Heart right ventricle (tissue), 16 donors: ENCODE measurements at regions of chr20 and their contacts with region 1.

Region 1: DNA sequence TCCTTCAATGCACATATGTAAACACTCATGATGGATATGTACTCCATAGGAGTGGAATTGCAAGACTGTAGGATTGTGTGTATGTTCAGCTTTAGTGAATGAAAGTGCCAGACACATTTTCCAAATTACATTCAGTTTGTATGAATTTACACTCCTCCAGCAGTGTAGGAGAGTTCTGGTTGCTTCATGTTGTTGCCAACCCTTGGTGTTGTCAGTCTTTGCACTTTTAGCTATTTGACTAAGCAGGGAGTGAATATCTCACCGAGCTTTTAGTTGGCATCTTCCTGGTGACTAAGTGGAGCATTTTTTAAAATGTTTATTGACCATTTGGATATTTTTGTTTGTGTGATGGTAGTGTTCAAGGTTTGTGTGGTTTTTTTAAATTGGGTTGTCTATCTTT is 23.9 kb downstream of the NKX2-4 start:
- DNase-seq: no peak
- ATAC-seq: no peak
- H3K4me3 ChIP-seq: no peak overlapping the region
- H3K27ac ChIP-seq: no peak overlapping the region
- H3K4me1 ChIP-seq: peaks cover 0 to 7% (median 0%) of the 10 kb centered on the region in 9 donors
- H3K27me3 ChIP-seq: no peaks in the 10 kb centered on the region
- CTCF ChIP-seq: no peak

Region 2: DNA sequence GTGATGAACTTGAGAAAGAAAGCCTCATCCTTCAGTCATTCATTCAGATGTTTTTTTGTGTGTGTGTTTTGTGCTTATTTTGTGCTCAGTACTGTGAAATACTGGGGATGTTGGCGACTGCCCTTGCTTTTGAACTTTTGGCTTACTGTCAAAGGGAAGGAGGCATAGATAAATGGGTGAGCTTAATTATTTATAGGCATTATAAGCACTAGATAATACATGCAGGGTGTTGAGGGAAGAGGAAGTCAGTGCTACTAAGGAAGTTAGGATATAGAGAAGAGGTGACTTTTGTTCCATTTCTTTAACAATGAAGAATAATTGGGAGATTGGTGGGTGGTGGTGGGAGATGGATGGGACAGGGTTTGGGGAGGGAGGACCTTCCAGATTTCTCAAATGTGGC is 46.7 kb before region 1 on chr20:
- intact Hi-C with region 1: no loop called
- DNase-seq: no peak
- ATAC-seq: peak in 5 of 8 donors; percentile 34 to 68 (median 55)
- H3K4me3 ChIP-seq: no peak overlapping the region
- H3K27ac ChIP-seq: peak overlapping the region in 2 of 10 donors; percentile 27 to 73
- H3K4me1 ChIP-seq: peaks cover 0 to 57% (median 45%) of the 10 kb centered on the region in 9 donors
- H3K27me3 ChIP-seq: no peaks in the 10 kb centered on the region
- CTCF ChIP-seq: no peak

Region 3: GRCh38 chr20:21436205-21436604 is 62.8 kb after region 1 on chr20:
- intact Hi-C with region 1: loop called in 1 of 10 experiments (anchors 10 kb)
- DNase-seq: no peak
- ATAC-seq: no peak
- H3K4me3 ChIP-seq: no peak overlapping the region
- H3K27ac ChIP-seq: no peak overlapping the region
- H3K4me1 ChIP-seq: no peaks in the 10 kb centered on the region
- H3K27me3 ChIP-seq: peaks cover 0 to 77% (median 31%) of the 10 kb centered on the region in 7 donors
- CTCF ChIP-seq: no peak

Region 4: GRCh38 chr20:21677731-21678130 is 304.3 kb after region 1 on chr20:
- intact Hi-C with region 1: no loop called
- DNase-seq: no peak
- ATAC-seq: no peak
- H3K4me3 ChIP-seq: no peak overlapping the region
- H3K27ac ChIP-seq: no peak overlapping the region
- H3K4me1 ChIP-seq: no peaks in the 10 kb centered on the region
- H3K27me3 ChIP-seq: peaks cover 0 to 19% (median 0%) of the 10 kb centered on the region in 7 donors
- CTCF ChIP-seq: no peak